ENCODE measurements at regions of chr16 and their contacts with region 1.

Region 1: GRCh38 chr16:4288148-4288921 is 15.5 kb upstream of the TFAP4 start:
- DNase-seq: peak; percentile 75 to 79 (median 76)
- ATAC-seq: peak; percentile 69 to 86 (median 82)
- H3K4me3 ChIP-seq: no peak overlapping the region
- H3K27ac ChIP-seq: no peak overlapping the region
- H3K4me1 ChIP-seq: peaks cover 0 to 18% (median 5%) of the 10 kb centered on the region in 4 donors
- H3K27me3 ChIP-seq: no peaks in the 10 kb centered on the region
- CTCF ChIP-seq: peak; percentile 85 to 96 (median 92)
- POLR2A ChIP-seq: no peak

Region 2: DNA sequence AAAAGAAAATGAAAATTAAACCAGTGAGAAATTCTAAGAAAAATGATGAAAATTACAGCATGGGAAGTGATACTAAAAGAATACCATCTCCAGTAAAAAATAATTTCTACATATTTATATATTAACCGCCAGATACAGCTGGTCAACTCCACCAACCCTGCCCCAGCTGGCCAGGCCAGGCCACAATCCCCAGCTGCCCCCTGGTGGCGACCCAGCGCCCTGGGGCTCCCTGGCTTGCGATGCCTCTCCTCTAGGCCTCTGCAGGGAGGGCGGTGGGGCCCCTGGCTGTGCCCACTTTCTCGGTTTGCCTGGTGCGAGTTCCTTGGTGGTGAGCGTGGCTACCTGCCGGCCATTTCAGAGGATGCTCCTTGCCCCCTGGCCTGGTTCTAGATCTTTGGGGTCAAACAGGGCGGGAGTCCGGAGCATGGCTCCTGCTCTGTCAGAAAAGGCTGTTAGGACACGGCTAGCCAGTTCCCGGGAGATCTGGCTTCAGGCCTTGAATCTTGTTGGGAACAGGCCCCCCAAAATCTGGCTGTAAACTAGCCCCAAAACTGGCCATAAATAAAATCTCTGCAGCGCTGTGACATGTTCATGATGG is 42.0 kb after region 1 on chr16:
- intact Hi-C with region 1: loop called in 1 of 2 experiments (anchors 5 kb)
- DNase-seq: peak; percentile 84 to 88 (median 87)
- ATAC-seq: peak; percentile 74 to 82 (median 79)
- H3K4me3 ChIP-seq: no peak overlapping the region
- H3K27ac ChIP-seq: no peak overlapping the region
- H3K4me1 ChIP-seq: peaks cover 0 to 15% (median 5%) of the 10 kb centered on the region in 4 donors
- H3K27me3 ChIP-seq: no peaks in the 10 kb centered on the region
- CTCF ChIP-seq: peak; percentile 92 to 99 (median 98)
- POLR2A ChIP-seq: no peak

Region 3: DNA sequence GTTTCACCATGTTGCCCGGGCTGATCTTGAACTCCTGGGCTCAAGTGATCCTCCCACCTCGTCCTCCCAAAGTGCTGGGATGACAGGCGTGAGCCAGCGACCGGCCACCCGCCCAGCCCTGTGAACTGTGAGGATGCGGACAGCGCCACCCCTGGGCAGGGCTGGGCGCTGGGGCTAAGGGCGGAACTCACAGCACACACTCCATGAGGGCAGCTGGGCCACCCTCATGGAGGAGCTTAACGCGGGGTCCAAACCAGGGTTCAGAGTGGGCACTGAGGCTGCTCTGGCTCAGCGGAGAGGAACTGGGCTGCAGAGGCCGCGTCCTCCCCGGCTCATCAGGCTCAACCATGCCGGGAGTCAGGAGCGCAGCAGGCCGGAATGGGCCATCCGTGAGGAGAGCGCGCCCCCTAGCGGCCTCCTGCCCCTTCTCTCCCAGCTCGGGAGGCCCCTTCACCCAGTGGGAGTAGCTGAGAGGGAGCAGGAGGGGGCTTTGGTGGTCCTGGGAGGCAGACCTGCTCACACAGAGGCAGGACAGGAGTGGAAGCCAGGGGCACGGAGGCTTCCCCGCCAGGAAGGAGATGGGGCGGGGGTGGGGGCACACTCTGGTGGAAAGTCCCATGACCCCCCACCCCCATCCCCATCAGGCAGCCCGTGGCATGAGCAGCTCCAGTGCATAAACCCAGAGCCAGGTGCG is 114.3 kb after region 1 on chr16:
- intact Hi-C with region 1: loop called in 1 of 2 experiments (anchors 10 kb)
- DNase-seq: peak; percentile 82 to 85 (median 85)
- ATAC-seq: peak; percentile 92 to 95 (median 93)
- H3K4me3 ChIP-seq: peak overlapping the region in 1 of 3 donors; percentile 27
- H3K27ac ChIP-seq: no peak overlapping the region
- H3K4me1 ChIP-seq: peaks cover 0 to 4% (median 0%) of the 10 kb centered on the region in 4 donors
- H3K27me3 ChIP-seq: no peaks in the 10 kb centered on the region
- CTCF ChIP-seq: peak; percentile 84 to 91 (median 90)
- POLR2A ChIP-seq: no peak

Region 4: DNA sequence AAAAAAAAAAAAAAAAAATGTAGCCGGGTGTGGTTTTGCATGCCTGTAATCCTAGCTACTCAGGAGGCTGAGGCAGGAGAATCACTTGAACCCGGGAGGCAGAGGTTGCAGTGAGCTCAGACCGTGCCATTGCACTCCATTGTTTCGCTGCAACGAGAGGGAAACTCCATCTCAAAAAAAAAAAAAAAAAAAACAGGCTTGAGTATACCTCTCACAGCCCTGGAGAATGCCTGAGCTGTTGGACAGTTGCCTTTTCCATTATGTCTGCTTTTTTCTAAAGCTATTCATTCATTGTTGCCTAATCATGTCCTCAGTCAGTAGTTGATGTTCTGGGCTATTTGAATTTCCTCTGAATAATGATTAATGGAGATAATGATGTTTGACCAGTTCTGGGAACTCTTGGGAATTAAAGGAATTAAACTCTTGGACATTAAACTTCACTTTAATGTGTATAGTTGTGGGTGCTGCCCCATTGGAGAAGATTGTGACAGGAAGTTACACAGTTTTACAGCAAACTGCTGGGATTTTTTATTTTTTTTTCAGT is 199.7 kb after region 1 on chr16:
- intact Hi-C with region 1: no loop called
- DNase-seq: no peak
- ATAC-seq: peak; percentile 83 to 85 (median 84)
- H3K4me3 ChIP-seq: no peak overlapping the region
- H3K27ac ChIP-seq: peak overlapping the region; percentile 47 to 71 (median 55)
- H3K4me1 ChIP-seq: peaks cover 0 to 48% (median 22%) of the 10 kb centered on the region in 4 donors
- H3K27me3 ChIP-seq: no peaks in the 10 kb centered on the region
- CTCF ChIP-seq: no peak
- POLR2A ChIP-seq: no peak

Measured in right lobe of liver (tissue), 6 donors.